Colonic mucosa (tissue), 4 donors: ENCODE measurements at regions of chr4 and their contacts with region 1.

Region 1: DNA sequence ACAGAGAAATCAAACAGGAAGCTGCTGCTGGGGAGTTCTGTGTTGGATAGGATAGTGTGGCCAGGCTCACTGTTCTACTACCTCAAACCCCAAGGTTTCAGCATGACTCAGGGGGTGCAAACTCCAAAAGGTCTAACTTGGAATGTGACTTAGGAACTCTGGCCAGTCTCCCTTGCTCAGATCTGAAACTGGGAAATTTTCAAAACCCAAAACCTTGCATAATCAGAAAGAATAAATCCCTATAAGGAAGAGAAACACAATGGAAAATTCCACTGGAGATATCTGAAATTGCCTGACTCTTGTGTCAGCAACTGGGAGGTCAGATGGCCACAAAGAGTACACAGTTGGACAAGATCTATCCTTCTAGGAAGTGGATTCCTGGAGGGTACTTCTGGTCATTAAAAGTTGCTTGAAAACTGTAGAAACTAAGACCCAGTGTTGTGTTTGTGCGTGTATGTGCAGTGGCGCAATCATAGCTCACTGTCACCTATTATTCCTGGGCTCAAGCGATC is 58.0 kb downstream of the PPEF2 start:
- DNase-seq: no peak
- H3K4me3 ChIP-seq: no peak overlapping the region
- H3K27ac ChIP-seq: no peak overlapping the region
- H3K4me1 ChIP-seq: no peaks in the 10 kb centered on the region
- H3K27me3 ChIP-seq: no peaks in the 10 kb centered on the region
- CTCF ChIP-seq: no peak

Region 2: DNA sequence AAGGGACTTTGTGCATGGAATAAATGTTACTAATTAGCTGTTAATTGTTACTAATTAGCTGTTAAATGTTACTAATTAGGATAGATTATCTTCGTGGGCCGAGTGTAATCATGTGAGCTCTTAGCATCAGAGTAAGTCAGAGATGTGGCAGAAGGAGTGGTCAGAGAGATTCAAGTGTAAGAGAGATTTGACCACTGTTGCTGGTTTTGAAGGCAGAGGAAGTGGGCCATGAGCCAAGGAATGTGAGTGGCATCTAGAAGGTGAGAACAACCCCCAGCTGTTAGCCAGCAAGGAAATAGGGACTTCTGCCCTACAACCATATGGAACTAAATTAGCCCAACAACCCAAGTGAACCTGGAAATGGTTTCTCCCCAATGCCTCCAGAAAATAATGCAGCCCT is 260.1 kb before region 1 on chr4:
- intact Hi-C with region 1: loop called (anchors 5 kb)
- DNase-seq: no peak
- H3K4me3 ChIP-seq: no peak overlapping the region
- H3K27ac ChIP-seq: no peak overlapping the region
- H3K4me1 ChIP-seq: no peaks in the 10 kb centered on the region
- H3K27me3 ChIP-seq: no peaks in the 10 kb centered on the region
- CTCF ChIP-seq: no peak

Region 3: GRCh38 chr4:75639124-75639695 is 205.0 kb before region 1 on chr4:
- intact Hi-C with region 1: no loop called
- DNase-seq: no peak
- H3K4me3 ChIP-seq: no peak overlapping the region
- H3K27ac ChIP-seq: no peak overlapping the region
- H3K4me1 ChIP-seq: no peaks in the 10 kb centered on the region
- H3K27me3 ChIP-seq: no peaks in the 10 kb centered on the region
- CTCF ChIP-seq: no peak

Region 4: GRCh38 chr4:75708218-75708691 is 136.0 kb before region 1 on chr4:
- intact Hi-C with region 1: no loop called
- DNase-seq: peak; percentile 55
- H3K4me3 ChIP-seq: no peak overlapping the region
- H3K27ac ChIP-seq: no peak overlapping the region
- H3K4me1 ChIP-seq: peaks cover 4% of the 10 kb centered on the region
- H3K27me3 ChIP-seq: no peaks in the 10 kb centered on the region
- CTCF ChIP-seq: peak; percentile 54